ENCODE measurements at regions of chr2 and their contacts with region 1.

Region 1: GRCh38 chr2:197209742-197210408 is 100.7 kb downstream of the ANKRD44 start:
- DNase-seq: peak; percentile 43
- H3K4me3 Mint-ChIP-seq: peak overlapping the region; percentile 60
- H3K27ac Mint-ChIP-seq: peak overlapping the region; percentile 90
- H3K4me1 Mint-ChIP-seq: peaks cover 92% of the 10 kb centered on the region
- H3K27me3 Mint-ChIP-seq: no peaks in the 10 kb centered on the region

Region 2: GRCh38 chr2:197198890-197199289 is 11.0 kb before region 1 on chr2:
- intact Hi-C with region 1: loop called (anchors 1 kb)
- DNase-seq: peak; percentile 89
- H3K4me3 Mint-ChIP-seq: peak overlapping the region; percentile 86
- H3K27ac Mint-ChIP-seq: peak overlapping the region; percentile 95
- H3K4me1 Mint-ChIP-seq: peaks cover 80% of the 10 kb centered on the region
- H3K27me3 Mint-ChIP-seq: no peaks in the 10 kb centered on the region

Region 3: GRCh38 chr2:197293252-197294007 is 83.6 kb after region 1 on chr2:
- intact Hi-C with region 1: loop called (anchors 1 kb)
- DNase-seq: no peak
- H3K4me3 Mint-ChIP-seq: peak overlapping the region; percentile 79
- H3K27ac Mint-ChIP-seq: peak overlapping the region; percentile 94
- H3K4me1 Mint-ChIP-seq: peaks cover 80% of the 10 kb centered on the region
- H3K27me3 Mint-ChIP-seq: no peaks in the 10 kb centered on the region

Region 4: GRCh38 chr2:197388866-197389587 is 179.2 kb after region 1 on chr2:
- intact Hi-C with region 1: no loop called
- DNase-seq: no peak
- H3K4me3 Mint-ChIP-seq: no peak overlapping the region
- H3K27ac Mint-ChIP-seq: no peak overlapping the region
- H3K4me1 Mint-ChIP-seq: peaks cover 8% of the 10 kb centered on the region
- H3K27me3 Mint-ChIP-seq: no peaks in the 10 kb centered on the region